ENCODE measurements at regions of chr4 and their contacts with region 1.

Region 1: DNA sequence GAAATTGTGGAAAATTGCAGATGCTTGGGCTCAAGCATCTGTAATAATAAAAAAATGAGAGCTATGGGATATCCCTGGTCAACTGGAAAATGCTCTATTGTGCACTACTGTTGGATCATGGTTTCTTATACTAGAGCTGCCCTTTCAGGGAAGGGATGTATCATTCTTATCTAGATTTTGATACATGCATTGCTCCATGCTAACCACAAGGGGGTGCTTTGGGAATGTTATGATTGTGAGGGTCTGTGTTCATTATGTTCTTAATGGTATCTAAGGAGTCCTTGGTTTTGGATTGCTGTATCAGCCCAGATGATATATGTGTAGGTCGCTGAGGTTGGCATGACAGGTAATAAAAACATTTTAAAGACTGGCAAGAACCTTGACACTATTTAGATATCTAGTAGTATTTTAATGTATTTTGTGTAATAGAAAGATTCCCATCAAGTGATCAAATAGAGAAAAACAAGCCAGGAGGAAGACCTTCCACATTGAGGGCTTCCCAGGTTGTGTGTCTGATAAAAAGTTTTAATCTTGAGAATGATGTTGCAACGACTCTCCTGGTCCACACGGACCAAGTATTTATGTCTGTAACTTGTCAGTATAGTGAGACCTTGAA is 49.2 kb upstream of the TLR2 start:
- DNase-seq: peak in 2 of 4 donors; percentile 16 to 28
- ATAC-seq: peak; percentile 90
- H3K4me3 ChIP-seq: no peak overlapping the region
- H3K27ac ChIP-seq: no peak overlapping the region
- H3K4me1 ChIP-seq: peaks cover 0 to 6% of the 10 kb centered on the region in 2 donors
- H3K27me3 ChIP-seq: no peaks in the 10 kb centered on the region
- CTCF ChIP-seq: peak; percentile 51 to 75

Region 2: DNA sequence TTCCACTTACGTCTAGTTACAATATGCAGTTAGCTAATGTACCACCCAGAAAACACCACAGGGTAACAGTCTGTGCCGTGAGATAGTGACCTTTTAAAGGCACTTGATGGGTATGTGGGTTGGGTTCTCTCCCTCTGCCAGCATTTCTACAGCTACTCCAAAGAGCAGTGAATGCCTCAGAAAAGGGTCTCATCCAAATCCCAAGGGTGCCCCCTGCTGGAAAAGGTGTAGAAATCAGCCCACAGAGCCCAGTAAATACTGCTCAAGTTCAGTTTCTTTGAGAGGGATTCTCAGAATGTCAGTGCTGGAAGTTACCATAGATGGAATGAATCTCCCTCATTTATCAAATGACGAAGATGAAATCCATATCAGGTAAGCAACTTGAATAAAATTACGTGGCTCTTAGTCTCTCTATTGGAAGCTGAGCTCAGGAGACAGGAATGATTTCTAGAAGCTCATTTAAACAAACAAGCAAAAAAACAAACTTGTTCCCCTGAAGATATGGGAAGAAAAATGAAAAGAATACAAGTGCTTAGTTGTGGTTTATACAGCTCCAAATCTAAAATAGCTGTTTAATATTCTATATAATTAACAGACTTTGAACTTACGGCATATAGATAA is 115.5 kb after region 1 on chr4:
- intact Hi-C with region 1: loop called in 1 of 2 experiments (anchors 10 kb)
- DNase-seq: peak in 3 of 4 donors; percentile 51 to 82 (median 64)
- ATAC-seq: peak; percentile 97
- H3K4me3 ChIP-seq: no peak overlapping the region
- H3K27ac ChIP-seq: no peak overlapping the region
- H3K4me1 ChIP-seq: peaks cover 0 to 34% of the 10 kb centered on the region in 2 donors
- H3K27me3 ChIP-seq: no peaks in the 10 kb centered on the region
- CTCF ChIP-seq: peak; percentile 51 to 77